Heart left ventricle (tissue), 16 donors: ENCODE measurements at regions of chr17 and their contacts with region 1.

Region 1: DNA sequence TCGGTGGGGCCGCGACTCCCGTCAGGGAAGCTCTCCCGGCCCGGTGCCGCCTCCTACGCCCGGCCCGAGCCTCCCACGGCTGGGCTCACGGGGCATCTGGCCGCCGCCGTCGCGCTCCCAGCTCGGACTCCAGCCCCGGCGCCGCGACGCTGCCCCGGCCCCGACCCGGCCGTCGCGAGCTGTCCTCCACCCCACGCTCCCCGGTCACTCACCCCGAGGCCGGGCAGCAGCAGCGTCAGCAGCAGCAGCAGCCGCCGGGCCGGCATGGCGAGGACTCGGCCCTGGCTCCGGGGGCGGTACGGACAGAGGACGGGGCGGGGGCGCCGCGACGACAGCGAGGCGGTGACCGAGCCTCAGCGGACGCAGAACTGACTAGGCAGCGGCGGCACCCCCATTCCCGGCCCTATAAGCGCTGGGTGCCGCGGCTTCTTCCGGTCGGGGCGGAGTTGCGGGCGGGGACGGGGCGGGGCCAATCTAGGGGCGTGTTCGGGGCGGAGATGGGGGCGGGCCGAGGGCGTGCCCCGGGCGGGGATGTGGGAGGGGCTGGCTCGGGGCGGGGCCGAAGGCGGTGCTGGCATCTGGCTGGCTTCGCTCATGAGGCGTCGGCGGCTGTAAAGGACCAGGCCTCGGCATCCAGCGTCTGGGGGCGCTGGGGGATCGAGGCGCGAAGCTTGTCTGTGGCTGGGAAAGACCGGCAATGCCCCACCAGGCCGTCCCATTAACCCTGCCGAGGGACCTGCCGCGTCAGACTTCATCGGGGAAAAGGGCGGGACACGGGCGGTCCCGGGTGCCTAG is at the start of gene ERN1:
- DNase-seq: peak; percentile 95 to 97 (median 95)
- ATAC-seq: peak; percentile 96 to 98 (median 97)
- H3K4me3 ChIP-seq: peak within 1 kb of the TSS; percentile 69 to 94 (median 85)
- H3K27ac ChIP-seq: peak within 1 kb of the TSS; percentile 90 to 98 (median 96)
- H3K4me1 ChIP-seq: peaks cover 0 to 54% (median 22%) of the 10 kb centered on the region in 12 donors
- H3K27me3 ChIP-seq: no peaks in the 10 kb centered on the region
- CTCF ChIP-seq: peak in 3 of 12 donors; percentile 4 to 15 (median 13)
- POLR2A ChIP-seq: peak; percentile 13 to 90
- total RNA-seq, gene ERN1: 5.1 to 18.7 (median 9.1) TPM

Region 2: GRCh38 chr17:63798572-63799106 is 331.3 kb before region 1 on chr17:
- intact Hi-C with region 1: no loop called
- DNase-seq: no peak
- ATAC-seq: no peak
- H3K4me3 ChIP-seq: no peak overlapping the region
- H3K27ac ChIP-seq: no peak overlapping the region
- H3K4me1 ChIP-seq: no peaks in the 10 kb centered on the region
- H3K27me3 ChIP-seq: no peaks in the 10 kb centered on the region
- CTCF ChIP-seq: no peak
- POLR2A ChIP-seq: no peak

Region 3: DNA sequence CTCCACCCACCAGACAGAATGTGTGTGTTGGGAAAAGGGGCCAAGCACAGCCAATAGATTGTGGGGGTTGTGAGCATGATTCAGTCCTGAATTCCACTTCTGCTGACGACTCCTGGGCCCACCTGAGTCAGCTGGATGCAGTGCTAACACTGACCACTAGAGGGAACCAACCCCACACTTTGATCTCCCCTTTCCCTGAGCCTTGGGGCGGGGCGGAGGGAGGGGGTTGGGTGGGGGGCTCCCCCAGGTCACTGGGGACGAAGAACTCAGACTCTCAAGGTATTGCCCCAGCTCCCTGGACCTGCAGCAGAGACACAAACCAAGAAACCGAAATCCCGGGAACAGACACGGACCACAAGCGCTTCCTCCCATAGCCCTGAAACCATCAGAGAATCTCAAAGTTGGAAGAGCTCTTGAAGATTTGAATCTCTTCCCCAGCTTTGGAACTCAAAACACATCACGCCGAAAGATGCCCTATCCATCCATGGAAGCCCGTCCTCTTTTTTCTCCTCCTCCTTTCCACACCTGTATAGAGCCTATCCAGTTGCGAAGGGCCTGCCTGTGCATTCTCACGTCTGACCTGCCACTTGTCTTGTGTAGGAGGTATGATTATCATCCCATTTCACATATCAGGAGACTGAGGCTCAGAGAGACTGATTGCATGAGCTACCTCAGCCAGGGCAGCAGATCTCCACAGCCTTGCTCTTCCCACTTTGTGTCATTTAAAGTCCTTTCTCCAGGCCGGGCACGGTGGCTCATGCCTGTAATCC is 218.1 kb before region 1 on chr17:
- intact Hi-C with region 1: loop called in 9 of 10 experiments (anchors 5 kb)
- DNase-seq: peak in 1 of 5 donors; percentile 34
- ATAC-seq: peak; percentile 38 to 67 (median 62)
- H3K4me3 ChIP-seq: no peak overlapping the region
- H3K27ac ChIP-seq: no peak overlapping the region
- H3K4me1 ChIP-seq: no peaks in the 10 kb centered on the region
- H3K27me3 ChIP-seq: peaks cover 0 to 11% (median 0%) of the 10 kb centered on the region in 9 donors
- CTCF ChIP-seq: peak; percentile 77 to 91 (median 81)
- POLR2A ChIP-seq: no peak

Region 4: GRCh38 chr17:63919311-63919723 is 210.6 kb before region 1 on chr17:
- intact Hi-C with region 1: loop called (anchors 2 to 5 kb)
- DNase-seq: peak in 4 of 5 donors; percentile 49 to 58 (median 54)
- ATAC-seq: peak; percentile 59 to 86 (median 86)
- H3K4me3 ChIP-seq: no peak overlapping the region
- H3K27ac ChIP-seq: no peak overlapping the region
- H3K4me1 ChIP-seq: peaks cover 0 to 7% (median 0%) of the 10 kb centered on the region in 12 donors
- H3K27me3 ChIP-seq: no peaks in the 10 kb centered on the region
- CTCF ChIP-seq: peak; percentile 85 to 97 (median 91)
- POLR2A ChIP-seq: no peak

Region 5: GRCh38 chr17:64025732-64026294 is 104.1 kb before region 1 on chr17:
- intact Hi-C with region 1: loop called (anchors 1 to 2 kb)
- DNase-seq: peak; percentile 77 to 92 (median 82)
- ATAC-seq: peak; percentile 56 to 87 (median 82)
- H3K4me3 ChIP-seq: peak overlapping the region in 7 of 12 donors; percentile 0 to 37 (median 16)
- H3K27ac ChIP-seq: peak overlapping the region in 8 of 12 donors; percentile 3 to 77 (median 54)
- H3K4me1 ChIP-seq: peaks cover 0 to 33% (median 7%) of the 10 kb centered on the region in 12 donors
- H3K27me3 ChIP-seq: no peaks in the 10 kb centered on the region
- CTCF ChIP-seq: peak; percentile 90 to 99 (median 94)
- POLR2A ChIP-seq: no peak

Region 6: GRCh38 chr17:64063766-64064224 is 66.2 kb before region 1 on chr17:
- intact Hi-C with region 1: loop called in 8 of 10 experiments (anchors 2 to 10 kb)
- DNase-seq: peak; percentile 45 to 80 (median 46)
- ATAC-seq: peak; percentile 56 to 82 (median 76)
- H3K4me3 ChIP-seq: no peak overlapping the region
- H3K27ac ChIP-seq: peak overlapping the region in 1 of 12 donors; percentile 55
- H3K4me1 ChIP-seq: peaks cover 0 to 53% (median 0%) of the 10 kb centered on the region in 12 donors
- H3K27me3 ChIP-seq: no peaks in the 10 kb centered on the region
- CTCF ChIP-seq: peak; percentile 29 to 63 (median 52)
- POLR2A ChIP-seq: no peak

Region 7: GRCh38 chr17:64081802-64082799 is 47.9 kb before region 1 on chr17:
- intact Hi-C with region 1: loop called in 1 of 10 experiments (anchors 5 kb)
- DNase-seq: no peak
- ATAC-seq: peak in 2 of 4 donors; percentile 36 to 59
- H3K4me3 ChIP-seq: no peak overlapping the region
- H3K27ac ChIP-seq: peak overlapping the region in 1 of 12 donors; percentile 70
- H3K4me1 ChIP-seq: peaks cover 0 to 49% (median 11%) of the 10 kb centered on the region in 12 donors
- H3K27me3 ChIP-seq: no peaks in the 10 kb centered on the region
- CTCF ChIP-seq: no peak
- POLR2A ChIP-seq: no peak

Region 8: DNA sequence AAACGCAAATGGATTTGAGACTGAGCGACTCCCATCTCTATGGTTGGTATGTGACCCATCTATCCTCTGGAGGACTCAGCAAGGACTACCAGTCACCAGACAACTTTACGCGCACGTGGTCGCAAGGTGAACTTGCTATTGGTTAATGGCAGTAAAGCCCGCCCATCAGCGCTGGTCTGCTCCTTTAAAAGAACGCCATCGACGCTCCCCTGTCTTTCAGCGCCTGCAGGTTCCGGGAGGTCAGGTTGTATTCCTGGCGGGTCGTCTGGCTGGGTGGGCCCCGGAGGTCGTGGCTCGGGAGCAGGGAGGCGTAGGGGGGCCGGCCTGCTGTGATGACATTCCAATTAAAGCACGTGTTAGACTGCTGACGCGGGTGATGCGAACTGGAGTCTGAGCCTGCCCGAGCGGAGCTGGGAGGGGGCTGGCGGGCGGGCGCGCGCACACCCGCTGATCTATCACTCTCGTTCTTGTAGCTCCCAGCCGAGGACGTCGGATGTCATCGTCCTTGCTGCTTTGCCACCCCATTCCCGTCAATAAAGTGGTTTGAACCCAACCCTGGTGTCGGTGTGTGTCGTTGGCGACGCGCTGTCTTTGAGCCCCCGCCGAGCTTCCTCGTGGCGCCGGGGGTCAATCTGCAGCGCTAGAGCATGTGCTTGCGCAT is 15.9 kb after region 1 on chr17:
- intact Hi-C with region 1: loop called in 1 of 10 experiments (anchors 1 kb)
- DNase-seq: peak; percentile 96 to 99 (median 98)
- ATAC-seq: peak; percentile 95 to 97 (median 96)
- H3K4me3 ChIP-seq: peak overlapping the region; percentile 58 to 97 (median 82)
- H3K27ac ChIP-seq: peak overlapping the region; percentile 90 to 100 (median 97)
- H3K4me1 ChIP-seq: peaks cover 0 to 41% (median 30%) of the 10 kb centered on the region in 12 donors
- H3K27me3 ChIP-seq: no peaks in the 10 kb centered on the region
- CTCF ChIP-seq: peak in 1 of 12 donors; percentile 5
- POLR2A ChIP-seq: peak; percentile 86 to 98

Region 9: GRCh38 chr17:64378890-64379354 is 249.0 kb after region 1 on chr17:
- intact Hi-C with region 1: no loop called
- DNase-seq: no peak
- ATAC-seq: peak in 2 of 4 donors; percentile 26 to 28
- H3K4me3 ChIP-seq: no peak overlapping the region
- H3K27ac ChIP-seq: peak overlapping the region in 5 of 12 donors; percentile 11 to 45 (median 21)
- H3K4me1 ChIP-seq: peaks cover 0 to 67% (median 25%) of the 10 kb centered on the region in 12 donors
- H3K27me3 ChIP-seq: no peaks in the 10 kb centered on the region
- CTCF ChIP-seq: no peak
- POLR2A ChIP-seq: no peak